ENCODE measurements at regions of chr3 and their contacts with region 1.

Region 1: DNA sequence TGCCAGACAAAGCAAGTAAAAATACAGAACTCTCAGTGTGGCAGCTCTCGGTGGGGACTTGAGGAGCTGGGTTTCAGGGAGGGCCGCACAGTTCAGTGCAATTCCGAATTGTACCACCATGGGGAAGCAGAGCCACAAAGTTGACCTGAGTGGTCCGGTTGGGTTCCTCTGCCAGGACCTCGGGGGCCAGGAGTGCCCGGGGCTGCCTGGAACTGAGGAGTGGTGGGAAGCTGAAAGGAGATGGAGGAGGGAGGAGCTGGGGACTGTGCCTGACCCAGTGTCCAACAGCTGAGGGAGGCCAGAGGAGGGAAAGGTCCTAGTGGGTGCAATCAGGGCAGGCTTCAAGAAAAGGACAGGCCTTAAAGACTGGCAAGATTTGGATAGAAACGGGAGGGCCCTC is 32.2 kb upstream of the TRH start:
- DNase-seq: peak; percentile 34 to 93 (median 74)

Region 2: DNA sequence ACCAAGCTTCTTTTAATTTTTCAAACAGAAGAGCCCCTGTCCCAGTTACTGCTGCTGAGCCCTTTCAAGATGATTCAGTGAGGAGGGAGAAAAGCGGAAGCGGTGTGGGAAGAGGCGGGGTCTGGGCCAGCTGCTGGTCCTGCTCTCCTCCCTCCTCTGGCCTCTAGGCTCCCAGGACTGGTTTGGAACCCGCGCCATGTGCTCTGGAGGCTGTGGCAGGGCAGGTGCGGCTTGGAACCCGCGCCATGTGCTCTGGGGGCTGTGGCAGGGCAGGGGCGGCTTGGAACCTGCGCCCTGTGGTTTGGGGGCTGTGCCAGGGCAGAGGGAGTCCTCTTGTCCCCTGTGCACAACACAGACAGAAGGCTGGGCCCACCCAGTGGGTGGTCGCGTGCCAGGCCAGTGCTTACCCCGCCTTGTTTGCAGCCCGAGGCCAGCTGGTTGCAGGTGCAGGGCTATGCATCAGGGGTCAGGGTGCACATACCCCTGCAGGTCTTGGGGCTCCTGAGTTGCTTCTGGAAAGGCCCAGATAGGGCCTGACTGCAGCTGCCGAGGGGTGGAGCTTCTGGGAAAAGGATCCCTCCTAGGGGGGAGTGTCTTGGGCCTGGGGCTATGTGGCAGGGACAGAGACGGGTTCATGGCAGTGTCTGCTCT is 151.6 kb after region 1 on chr3:
- intact Hi-C with region 1: loop called (anchors 2 kb)
- DNase-seq: no peak

Measured in posterior cingulate gyrus (tissue), 11 donors.